ENCODE measurements at regions of chr2 and their contacts with region 1.

Region 1: DNA sequence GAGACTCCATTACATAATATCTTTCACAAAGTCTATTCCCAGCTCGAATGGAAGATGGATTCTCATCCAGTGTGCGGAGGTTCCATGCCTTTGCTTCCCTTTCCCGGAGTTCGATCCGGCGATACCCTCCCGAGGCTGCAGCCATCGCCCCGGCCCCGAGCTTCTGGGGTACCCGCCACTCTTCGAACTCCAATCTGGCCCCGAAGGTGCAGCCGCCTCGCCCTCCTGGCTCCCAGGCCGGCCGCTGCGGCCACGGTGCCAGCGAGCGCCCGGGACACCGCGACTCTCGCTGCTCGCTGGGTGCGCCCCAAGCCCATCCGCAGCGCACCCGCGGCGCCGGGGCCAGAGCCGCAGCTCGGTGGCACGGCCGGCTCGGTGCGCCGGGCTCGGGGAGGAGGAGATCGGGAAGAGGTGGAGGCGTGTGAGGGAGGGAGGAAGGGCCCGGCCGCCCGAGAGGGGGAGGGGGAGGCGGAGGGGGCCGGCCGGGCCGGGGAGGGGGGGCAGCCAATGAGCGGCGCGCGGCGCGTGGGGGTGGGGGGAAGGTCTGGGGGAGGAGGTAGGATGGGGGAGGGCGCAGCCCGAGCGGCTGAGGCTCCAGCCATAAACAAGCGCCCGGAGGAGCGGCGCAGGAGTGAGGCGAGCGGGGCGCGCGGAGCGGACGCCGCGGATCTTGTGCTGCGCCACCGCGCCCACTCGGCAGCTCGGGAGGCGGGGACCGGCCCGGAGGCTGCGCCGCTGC is at the start of gene CRIM1:
- DNase-seq: no peak
- ATAC-seq: peak; percentile 45
- H3K4me3 ChIP-seq: peak within 1 kb of the TSS; percentile 49; the same call in 1 of the 2 replicates
- H3K27ac ChIP-seq: no peak within 1 kb of the TSS
- H3K4me1 ChIP-seq: peaks cover 9% of the 10 kb centered on the region
- H3K27me3 ChIP-seq: peaks cover 1 to 7% of the 10 kb centered on the region in 2 experiments; a peak in 3 of 4 replicates
- CTCF ChIP-seq: no peak
- EP300 ChIP-seq: no peak
- POLR2A ChIP-seq: 0 out of 2 replicates have a peak, but pooled peaks have one; percentile 34
- RAD21 ChIP-seq: no peak
- polyA plus RNA-seq, gene CRIM1: 2.1 to 2.4 TPM

Region 2: GRCh38 chr2:36173760-36174404 is 181.4 kb before region 1 on chr2:
- CTCF ChIA-PET with region 1: no interaction called
- POLR2A ChIA-PET with region 1: no interaction called
- RAD21 ChIA-PET with region 1: no interaction called
- SMC1A ChIA-PET with region 1: no interaction called
- in situ Hi-C with region 1: no loop called
- intact Hi-C with region 1: no loop called
- DNase-seq: no peak
- ATAC-seq: no peak
- H3K4me3 ChIP-seq: no peak overlapping the region
- H3K27ac ChIP-seq: no peak overlapping the region
- H3K4me1 ChIP-seq: no peaks in the 10 kb centered on the region
- H3K27me3 ChIP-seq: no peaks in the 10 kb centered on the region
- CTCF ChIP-seq: no peak
- EP300 ChIP-seq: no peak
- POLR2A ChIP-seq: no peak
- RAD21 ChIP-seq: no peak

Region 3: DNA sequence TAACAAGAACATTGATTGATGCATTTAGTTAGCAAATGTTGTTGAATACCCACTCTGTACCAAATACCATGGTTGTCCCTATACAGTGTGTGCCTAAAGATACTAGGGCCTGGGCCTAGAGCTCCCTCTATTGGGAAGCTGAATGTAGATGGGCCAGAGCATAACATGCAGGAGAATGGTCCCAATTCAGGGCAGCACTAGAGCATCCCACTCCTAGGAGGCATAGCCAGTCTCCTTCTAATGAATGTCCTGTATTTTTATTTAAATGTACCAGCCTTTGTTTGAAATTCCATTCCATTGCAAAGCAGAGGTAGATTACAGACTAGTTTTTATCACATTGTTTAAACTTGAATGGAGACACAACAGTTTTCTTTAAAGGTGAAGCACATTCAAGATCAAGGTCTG is 152.1 kb after region 1 on chr2:
- CTCF ChIA-PET with region 1: interaction called, 18 read pairs
- POLR2A ChIA-PET with region 1: no interaction called
- RAD21 ChIA-PET with region 1: interaction called, 5 read pairs
- SMC1A ChIA-PET with region 1: interaction called, 9 read pairs
- in situ Hi-C with region 1: no loop called
- intact Hi-C with region 1: loop called (anchors 1 kb)
- DNase-seq: no peak
- ATAC-seq: peak; percentile 97
- H3K4me3 ChIP-seq: no peak overlapping the region
- H3K27ac ChIP-seq: no peak overlapping the region
- H3K4me1 ChIP-seq: no peaks in the 10 kb centered on the region
- H3K27me3 ChIP-seq: no peaks in the 10 kb centered on the region
- CTCF ChIP-seq: peak; percentile 80 to 81 (median 81)
- EP300 ChIP-seq: no peak
- POLR2A ChIP-seq: no peak
- RAD21 ChIP-seq: peak; percentile 95

Region 4: GRCh38 chr2:36650031-36650430 is 294.7 kb after region 1 on chr2:
- CTCF ChIA-PET with region 1: interaction called, 12 read pairs
- POLR2A ChIA-PET with region 1: no interaction called
- RAD21 ChIA-PET with region 1: no interaction called
- SMC1A ChIA-PET with region 1: interaction called, 4 read pairs
- in situ Hi-C with region 1: no loop called
- intact Hi-C with region 1: no loop called
- DNase-seq: no peak
- ATAC-seq: peak; percentile 88
- H3K4me3 ChIP-seq: no peak overlapping the region
- H3K27ac ChIP-seq: no peak overlapping the region
- H3K4me1 ChIP-seq: no peaks in the 10 kb centered on the region
- H3K27me3 ChIP-seq: no peaks in the 10 kb centered on the region
- CTCF ChIP-seq: no peak
- EP300 ChIP-seq: no peak
- POLR2A ChIP-seq: no peak
- RAD21 ChIP-seq: no peak

Measured in GM12878 (cell line).